PC-9 (cell line): ENCODE measurements at regions of chr2 and their contacts with region 1.

Region 1: GRCh38 chr2:236193051-236193450 is 24.9 kb upstream of the GBX2 start:
- DNase-seq: peak in 1 of 2 experiments; percentile 9
- H3K4me3 ChIP-seq: no peak overlapping the region
- H3K27ac ChIP-seq: no peak overlapping the region
- H3K4me1 ChIP-seq: no peaks in the 10 kb centered on the region
- H3K27me3 ChIP-seq: no peaks in the 10 kb centered on the region
- CTCF ChIP-seq: no peak

Region 2: GRCh38 chr2:235766278-235766677 is 426.8 kb before region 1 on chr2:
- CTCF ChIA-PET with region 1: interaction called, 10 read pairs
- POLR2A ChIA-PET with region 1: no interaction called
- intact Hi-C with region 1: no loop called
- DNase-seq: peak; percentile 81 to 82
- H3K4me3 ChIP-seq: no peak overlapping the region
- H3K27ac ChIP-seq: no peak overlapping the region
- H3K4me1 ChIP-seq: no peaks in the 10 kb centered on the region
- H3K27me3 ChIP-seq: no peaks in the 10 kb centered on the region
- CTCF ChIP-seq: peak; percentile 99

Region 3: GRCh38 chr2:236209535-236209934 is 16.5 kb after region 1 on chr2:
- CTCF ChIA-PET with region 1: no interaction called
- POLR2A ChIA-PET with region 1: interaction called, 14 read pairs
- intact Hi-C with region 1: no loop called
- DNase-seq: peak in 1 of 2 experiments; percentile 33
- H3K4me3 ChIP-seq: no peak overlapping the region
- H3K27ac ChIP-seq: no peak overlapping the region
- H3K4me1 ChIP-seq: no peaks in the 10 kb centered on the region
- H3K27me3 ChIP-seq: no peaks in the 10 kb centered on the region
- CTCF ChIP-seq: no peak

Region 4: GRCh38 chr2:236264256-236264655 is 71.2 kb after region 1 on chr2 and contains the start of gene ASB18:
- CTCF ChIA-PET with region 1: no interaction called
- POLR2A ChIA-PET with region 1: no interaction called
- intact Hi-C with region 1: no loop called
- DNase-seq: no peak
- H3K4me3 ChIP-seq: no peak within 1 kb of the TSS
- H3K27ac ChIP-seq: no peak within 1 kb of the TSS
- H3K4me1 ChIP-seq: no peaks in the 10 kb centered on the region
- H3K27me3 ChIP-seq: peaks cover 73% of the 10 kb centered on the region
- CTCF ChIP-seq: no peak
- total RNA-seq, gene ASB18: 0.46 TPM in 1 of 2 replicates, not detected in the other

Region 5: DNA sequence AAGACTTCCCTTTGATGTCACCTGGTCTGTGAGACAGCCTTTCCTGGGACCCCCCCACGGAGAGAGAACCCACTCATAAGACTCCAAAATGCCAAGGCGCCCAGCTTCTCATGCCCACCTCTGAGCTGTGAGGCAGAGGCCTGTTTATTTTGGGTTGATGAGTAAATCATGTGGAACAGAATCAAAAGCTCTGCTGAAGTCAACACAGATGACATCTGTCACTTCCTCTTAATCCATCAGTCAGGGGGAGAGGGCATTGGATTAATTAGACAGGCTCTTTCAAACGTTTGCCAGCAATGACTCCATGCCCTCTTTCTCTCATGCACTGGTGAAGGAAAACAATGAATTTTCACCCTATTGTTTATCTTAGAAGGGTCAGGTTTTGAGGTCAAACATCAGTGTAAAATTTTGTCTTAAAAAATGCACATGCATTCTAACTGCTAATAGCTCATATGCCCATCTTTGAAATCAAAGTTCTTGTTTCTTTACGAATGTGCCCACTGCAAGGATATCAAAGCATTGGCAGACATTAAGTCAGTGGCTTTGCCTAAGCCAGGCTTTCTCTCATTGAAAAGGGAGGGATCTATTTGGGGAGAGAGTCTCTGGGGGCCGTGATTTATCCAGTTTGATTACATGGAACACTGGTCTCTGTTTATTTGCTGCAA is 560.7 kb after region 1 on chr2:
- CTCF ChIA-PET with region 1: no interaction called
- POLR2A ChIA-PET with region 1: no interaction called
- intact Hi-C with region 1: no loop called
- DNase-seq: no peak
- H3K4me3 ChIP-seq: no peak overlapping the region
- H3K27ac ChIP-seq: no peak overlapping the region
- H3K4me1 ChIP-seq: peaks cover 77% of the 10 kb centered on the region
- H3K27me3 ChIP-seq: no peaks in the 10 kb centered on the region
- CTCF ChIP-seq: no peak